ENCODE measurements at regions of chr20 and their contacts with region 1.

Region 1: DNA sequence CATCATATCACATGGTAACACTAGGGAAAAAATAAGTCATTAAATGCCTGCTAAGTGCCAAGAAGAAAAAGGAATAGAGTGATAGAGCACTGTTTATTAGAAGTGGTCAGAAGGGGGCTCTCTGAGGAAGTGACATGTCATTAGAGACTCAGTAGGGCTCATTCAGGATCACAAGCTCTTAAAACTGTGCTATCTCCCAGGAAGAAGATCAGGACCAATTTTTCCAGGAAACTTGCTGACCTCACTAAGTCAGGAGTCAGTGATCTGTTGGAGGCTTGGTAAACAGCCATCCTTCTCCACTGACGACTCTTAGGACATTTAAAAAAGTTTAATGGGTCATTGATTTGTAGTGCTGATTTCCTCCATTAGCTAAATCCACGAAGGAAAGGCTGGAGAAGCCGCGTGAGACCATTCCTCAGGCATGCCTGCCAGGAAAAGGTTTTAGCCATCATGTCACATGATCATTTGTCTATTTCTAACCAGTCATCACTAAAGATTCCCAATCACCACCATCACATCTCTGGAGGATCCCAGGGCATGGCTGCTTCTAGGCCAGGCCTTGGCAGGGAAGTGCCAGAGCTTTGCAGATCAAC is 5.9 kb upstream of the PTPN1 start:
- DNase-seq: peak; percentile 61
- H3K4me3 ChIP-seq: no peak overlapping the region
- H3K27ac ChIP-seq: no peak overlapping the region
- H3K4me1 ChIP-seq: peaks cover 3% of the 10 kb centered on the region
- H3K27me3 ChIP-seq: no peaks in the 10 kb centered on the region
- CTCF ChIP-seq: peak in 1 of 2 donors; percentile 6
- POLR2A ChIP-seq: no peak

Region 2: DNA sequence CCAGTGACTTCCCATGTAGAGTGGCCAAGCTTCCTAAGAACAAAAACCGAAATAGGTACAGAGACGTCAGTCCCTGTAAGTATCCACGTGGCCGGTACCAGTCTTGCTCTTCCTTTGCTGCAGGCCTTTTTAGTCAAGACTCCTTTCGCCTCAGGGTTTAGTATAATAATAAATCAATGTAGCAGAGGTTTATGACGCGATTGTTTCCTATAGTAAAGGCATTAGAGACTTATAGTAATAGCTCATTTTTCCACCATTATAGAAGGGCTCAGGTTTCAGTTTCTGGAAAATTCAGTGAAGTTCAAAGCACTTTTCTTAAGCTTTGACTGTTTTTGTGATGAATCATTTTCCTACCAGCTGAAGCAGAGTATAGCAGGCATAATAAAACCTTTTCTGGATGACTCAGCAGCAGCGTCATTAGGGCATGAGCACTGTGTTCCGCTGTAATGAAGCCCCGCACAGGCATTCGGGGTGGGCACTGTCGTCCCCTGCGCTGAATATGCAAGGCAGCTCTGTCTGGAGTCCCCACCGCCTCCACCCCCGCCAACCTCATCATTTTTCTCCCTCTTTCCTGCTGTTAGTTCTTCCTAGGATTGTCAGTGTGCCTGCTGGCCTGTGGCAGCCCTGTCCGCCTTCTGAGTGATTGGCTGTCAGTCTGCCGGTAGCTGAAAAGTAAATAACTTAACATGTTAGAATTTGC is 57.2 kb after region 1 on chr20:
- CTCF ChIA-PET with region 1: interaction called, 11 read pairs
- POLR2A ChIA-PET with region 1: no interaction called
- dilution Hi-C with region 1: no loop called
- intact Hi-C with region 1: no loop called
- DNase-seq: peak; percentile 97
- H3K4me3 ChIP-seq: peak overlapping the region in 1 of 3 experiments; percentile 3
- H3K27ac ChIP-seq: peak overlapping the region; percentile 84
- H3K4me1 ChIP-seq: peaks cover 47% of the 10 kb centered on the region
- H3K27me3 ChIP-seq: no peaks in the 10 kb centered on the region
- CTCF ChIP-seq: no peak
- POLR2A ChIP-seq: no peak

Region 3: DNA sequence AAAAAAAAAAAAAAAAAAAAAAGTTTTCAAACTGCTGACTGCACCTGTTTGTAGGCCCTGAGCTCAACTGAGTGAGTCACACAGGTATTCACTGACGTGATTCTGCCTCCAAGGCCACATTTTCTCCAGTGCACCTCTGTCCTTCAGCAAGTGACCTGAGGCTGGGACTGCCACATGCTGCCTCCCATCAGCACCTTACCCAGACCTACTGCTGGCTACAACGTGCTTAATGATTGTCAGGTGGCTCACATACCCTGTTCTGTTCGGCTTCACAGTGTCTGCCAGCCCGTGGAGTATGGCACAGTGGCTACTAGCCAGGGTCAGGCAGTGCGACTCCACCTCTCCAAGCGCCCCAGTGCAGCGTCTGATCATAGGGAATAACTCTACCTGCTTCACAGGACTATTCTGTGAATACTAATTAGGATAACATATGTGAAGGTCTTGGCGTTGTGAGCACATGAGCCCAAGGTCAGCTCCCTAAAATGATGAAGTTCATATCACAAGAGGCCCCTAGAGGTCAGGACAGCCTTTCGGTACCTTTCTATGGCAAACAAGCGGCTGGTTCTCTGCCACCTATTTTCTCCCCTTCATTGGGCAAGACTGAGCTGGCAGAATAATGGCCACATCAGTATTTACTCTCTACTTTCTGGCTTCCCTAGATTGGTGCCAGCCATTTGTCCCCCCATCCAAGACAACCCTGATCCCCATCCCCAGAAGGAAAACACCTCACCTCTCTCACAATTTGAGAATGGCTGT is 158.9 kb after region 1 on chr20:
- CTCF ChIA-PET with region 1: no interaction called
- POLR2A ChIA-PET with region 1: no interaction called
- dilution Hi-C with region 1: no loop called
- intact Hi-C with region 1: no loop called
- DNase-seq: no peak
- H3K4me3 ChIP-seq: no peak overlapping the region
- H3K27ac ChIP-seq: no peak overlapping the region
- H3K4me1 ChIP-seq: no peaks in the 10 kb centered on the region
- H3K27me3 ChIP-seq: peaks cover 0 to 2% of the 10 kb centered on the region in 2 experiments
- CTCF ChIP-seq: no peak
- POLR2A ChIP-seq: no peak

Measured in endothelial cell of umbilical vein (primary cell).